Mammary epithelial cell (primary cell): ENCODE measurements at regions of chr5 and their contacts with region 1.

Region 1: DNA sequence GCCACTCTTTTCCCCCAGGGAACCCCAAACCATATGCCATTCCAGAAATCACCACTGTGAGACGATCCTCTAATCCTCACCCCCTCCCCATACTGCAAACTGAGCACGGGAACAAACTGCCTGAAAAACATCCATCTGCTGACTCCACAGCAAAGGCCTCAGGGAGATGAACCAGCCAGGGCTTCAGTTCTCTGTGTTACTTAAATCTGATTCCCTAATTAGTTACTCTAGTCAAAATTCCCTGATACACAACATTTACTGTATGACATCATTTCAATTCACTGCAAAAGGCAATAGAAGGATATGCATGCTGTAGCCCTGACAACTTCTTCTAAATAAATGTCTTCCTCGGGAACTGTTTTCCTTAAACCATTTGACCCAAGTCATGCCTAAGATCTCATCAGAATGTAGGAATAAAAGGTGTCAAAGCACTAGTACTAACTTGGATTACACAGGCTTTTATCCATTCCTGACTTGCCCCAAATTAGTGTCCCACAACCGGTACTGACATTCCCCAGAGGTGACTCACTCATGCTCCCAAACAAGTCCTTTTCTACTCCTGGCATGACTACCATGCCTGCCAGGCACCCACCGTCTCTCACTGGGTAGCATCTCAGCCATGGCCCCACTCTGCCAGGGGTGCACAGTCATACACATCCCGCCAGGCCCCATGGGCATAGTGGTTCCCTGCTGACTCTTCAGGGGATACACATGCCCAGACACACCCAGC is 35.0 kb downstream of the MTX3 start:
- DNase-seq: peak; percentile 93
- H3K4me3 ChIP-seq: no peak overlapping the region
- H3K27ac ChIP-seq: peak overlapping the region; percentile 69
- H3K4me1 ChIP-seq: peaks cover 23% of the 10 kb centered on the region
- H3K27me3 ChIP-seq: no peaks in the 10 kb centered on the region
- CTCF ChIP-seq: no peak

Region 2: GRCh38 chr5:78829811-78830527 is 1126.1 kb before region 1 on chr5:
- CTCF ChIA-PET with region 1: no interaction called
- dilution Hi-C with region 1: no loop called
- in situ Hi-C with region 1: no loop called
- intact Hi-C with region 1: no loop called
- DNase-seq: no peak
- H3K4me3 ChIP-seq: no peak overlapping the region
- H3K27ac ChIP-seq: no peak overlapping the region
- H3K4me1 ChIP-seq: no peaks in the 10 kb centered on the region
- H3K27me3 ChIP-seq: no peaks in the 10 kb centered on the region
- CTCF ChIP-seq: no peak

Region 3: DNA sequence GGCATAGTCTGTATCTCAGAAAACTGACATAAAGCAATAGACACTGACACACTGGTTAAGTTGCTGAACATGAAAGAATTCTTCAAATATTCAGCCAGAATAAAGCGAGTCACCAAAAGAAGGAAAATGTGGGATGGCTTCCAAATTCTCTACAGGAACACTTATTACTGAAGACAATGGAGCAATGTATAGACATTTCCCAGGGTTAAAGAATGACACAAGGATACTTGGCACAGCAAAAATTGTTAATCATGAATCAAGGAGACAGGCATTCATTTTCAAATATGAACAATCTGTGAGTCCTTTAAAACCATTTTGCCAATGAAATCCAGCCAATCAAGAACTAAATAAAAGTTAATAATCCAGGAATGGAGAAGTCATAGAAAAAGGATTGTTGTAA is 57.5 kb before region 1 on chr5:
- CTCF ChIA-PET with region 1: no interaction called
- dilution Hi-C with region 1: no loop called
- in situ Hi-C with region 1: no loop called
- intact Hi-C with region 1: no loop called
- DNase-seq: no peak
- H3K4me3 ChIP-seq: no peak overlapping the region
- H3K27ac ChIP-seq: no peak overlapping the region
- H3K4me1 ChIP-seq: no peaks in the 10 kb centered on the region
- H3K27me3 ChIP-seq: no peaks in the 10 kb centered on the region
- CTCF ChIP-seq: no peak

Region 4: GRCh38 chr5:79936002-79936645 is 20.0 kb before region 1 on chr5:
- CTCF ChIA-PET with region 1: no interaction called
- dilution Hi-C with region 1: no loop called
- in situ Hi-C with region 1: no loop called
- intact Hi-C with region 1: loop called (anchors 2 kb)
- DNase-seq: no peak
- H3K4me3 ChIP-seq: no peak overlapping the region
- H3K27ac ChIP-seq: no peak overlapping the region
- H3K4me1 ChIP-seq: peaks cover 47% of the 10 kb centered on the region
- H3K27me3 ChIP-seq: no peaks in the 10 kb centered on the region
- CTCF ChIP-seq: no peak

Region 5: GRCh38 chr5:79974891-79975290 is 18.8 kb after region 1 on chr5:
- CTCF ChIA-PET with region 1: no interaction called
- dilution Hi-C with region 1: no loop called
- in situ Hi-C with region 1: no loop called
- intact Hi-C with region 1: no loop called
- DNase-seq: peak; percentile 80
- H3K4me3 ChIP-seq: no peak overlapping the region
- H3K27ac ChIP-seq: peak overlapping the region; percentile 42
- H3K4me1 ChIP-seq: peaks cover 25% of the 10 kb centered on the region
- H3K27me3 ChIP-seq: no peaks in the 10 kb centered on the region
- CTCF ChIP-seq: no peak